H1 (cell line): ENCODE measurements at regions of chr3 and their contacts with region 1.

Region 1: GRCh38 chr3:138824114-138824506 is 10.6 kb downstream of the PIK3CB start:
- DNase-seq: no peak
- H3K4me3 ChIP-seq: no peak overlapping the region
- H3K27ac ChIP-seq: peak overlapping the region; percentile 67; the same call in 1 of the 2 replicates
- H3K4me1 ChIP-seq: peaks cover 3 to 11% (median 6%) of the 10 kb centered on the region in 4 experiments; a peak in 5 of 7 replicates
- H3K27me3 ChIP-seq: no peaks in the 10 kb centered on the region
- CTCF ChIP-seq: no peak
- EP300 ChIP-seq: no peak
- POLR2A ChIP-seq: no peak
- RAD21 ChIP-seq: no peak

Region 2: DNA sequence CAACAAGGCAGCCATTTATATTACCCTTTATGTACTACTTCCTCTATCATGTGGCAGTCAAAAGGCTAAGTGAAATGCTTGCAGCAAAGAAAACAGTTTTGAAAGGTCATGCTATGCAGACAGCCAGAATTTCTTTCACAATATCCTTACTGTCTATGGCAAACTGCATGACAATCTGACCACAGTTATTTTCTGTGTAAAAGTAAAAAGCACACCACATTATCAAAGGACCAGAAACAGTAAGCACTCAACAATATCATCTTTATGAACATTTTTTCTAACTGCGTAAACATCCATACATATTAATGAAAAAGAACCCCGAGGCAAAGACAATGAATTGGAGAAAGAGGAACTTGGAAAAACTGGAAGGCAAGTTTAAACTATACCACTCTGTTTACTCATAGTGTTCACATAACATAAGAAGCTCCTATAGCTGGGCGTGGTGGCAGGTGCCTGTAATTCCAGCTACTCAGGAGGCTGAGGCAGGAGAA is 37.3 kb before region 1 on chr3:
- CTCF ChIA-PET with region 1: no interaction called
- POLR2A ChIA-PET with region 1: no interaction called
- DNase-seq: no peak
- H3K4me3 ChIP-seq: no peak overlapping the region
- H3K27ac ChIP-seq: no peak overlapping the region
- H3K4me1 ChIP-seq: no peaks in the 10 kb centered on the region
- H3K27me3 ChIP-seq: no peaks in the 10 kb centered on the region
- CTCF ChIP-seq: no peak
- EP300 ChIP-seq: no peak
- POLR2A ChIP-seq: no peak
- RAD21 ChIP-seq: no peak

Region 3: DNA sequence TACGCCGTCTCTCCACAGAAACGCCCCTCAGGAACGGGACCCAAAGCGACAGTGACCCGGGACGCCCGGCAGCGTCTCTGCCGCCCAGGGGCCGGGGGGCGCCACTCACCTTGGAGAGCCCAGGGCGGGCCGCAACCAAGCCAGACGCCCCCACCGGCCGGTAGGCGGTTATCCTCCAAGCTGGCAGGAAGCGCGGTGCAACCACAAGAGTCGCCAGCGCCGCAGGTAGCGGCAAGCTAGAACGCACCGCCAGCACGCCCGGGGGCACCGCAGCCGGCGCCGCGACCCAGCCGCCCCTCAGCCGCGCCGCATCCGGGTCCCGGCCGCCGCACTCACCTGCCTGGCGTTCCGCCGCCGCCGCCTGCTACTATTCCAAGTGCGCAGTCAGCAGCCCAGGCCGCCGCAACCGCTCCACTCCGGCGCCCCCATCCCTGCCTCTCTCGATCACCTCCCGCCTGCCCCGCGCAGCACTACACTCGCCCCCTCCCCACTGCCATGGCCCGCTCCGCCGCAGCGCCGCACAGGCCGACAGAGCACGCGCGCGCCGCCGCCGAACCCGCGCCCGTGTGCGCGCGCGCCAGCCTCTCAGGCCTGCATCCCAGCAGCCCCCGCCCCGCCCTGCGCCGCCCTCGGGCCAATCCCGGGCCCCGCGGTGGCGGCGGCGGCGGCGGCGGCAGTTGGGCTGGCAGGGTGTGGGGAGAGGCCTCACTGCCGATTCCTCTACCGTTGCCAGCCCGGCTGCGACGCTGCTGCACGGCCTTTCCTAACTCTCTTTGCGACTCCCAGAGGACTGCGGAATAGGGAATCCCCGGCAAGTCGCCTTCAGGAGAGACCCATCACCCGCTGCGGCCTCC is 10.5 kb after region 1 on chr3 and contains the start of gene PIK3CB:
- CTCF ChIA-PET with region 1: interaction called, 3 read pairs
- POLR2A ChIA-PET with region 1: interaction called, 16 read pairs
- DNase-seq: peak; percentile 47 to 92
- H3K4me3 ChIP-seq: peak within 1 kb of the TSS; percentile 84 to 94 (median 88)
- H3K27ac ChIP-seq: peak within 1 kb of the TSS; percentile 93
- H3K4me1 ChIP-seq: peaks cover 0 to 6% (median 2%) of the 10 kb centered on the region in 4 experiments; a peak in 4 of 7 replicates
- H3K27me3 ChIP-seq: no peaks in the 10 kb centered on the region
- CTCF ChIP-seq: peak in 2 of 3 experiments; percentile 51 to 72; a peak in 3 of 4 replicates
- EP300 ChIP-seq: peak in 1 of 2 experiments; percentile 67; a peak in 1 of 3 replicates
- POLR2A ChIP-seq: peak; percentile 91 to 94
- RAD21 ChIP-seq: peak; percentile 35 to 51
- total RNA-seq, gene PIK3CB: 33.0 and 35.2 TPM in 2 replicates

Region 4: GRCh38 chr3:138842483-138843188 is 18.5 kb after region 1 on chr3:
- CTCF ChIA-PET with region 1: interaction called, 8 read pairs
- POLR2A ChIA-PET with region 1: interaction called, 13 read pairs
- DNase-seq: no peak
- H3K4me3 ChIP-seq: no peak overlapping the region
- H3K27ac ChIP-seq: no peak overlapping the region
- H3K4me1 ChIP-seq: peaks cover 7 to 21% (median 12%) of the 10 kb centered on the region in 4 experiments; a peak in 6 of 7 replicates
- H3K27me3 ChIP-seq: no peaks in the 10 kb centered on the region
- CTCF ChIP-seq: no peak
- EP300 ChIP-seq: no peak
- POLR2A ChIP-seq: no peak
- RAD21 ChIP-seq: no peak